Activated T-helper 2 cell treated with anti-CD3 and anti-CD28 coated beads, Interferon-gamma antibody, Interleukin-2, Interleukin-4, amounts not matched to agents 10 μg/mL and 5 μg/mL and 100 μg/mL, durations not matched to agents 14 hours and 24 hours and 36 hours (primary cell): ENCODE measurements at regions of chr3 and their contacts with region 1.

Region 1: GRCh38 chr3:147389717-147390116 is 16.6 kb downstream of the ZIC4 start:
- DNase-seq: no peak
- H3K4me3 Mint-ChIP-seq: no peak overlapping the region
- H3K27ac Mint-ChIP-seq: no peak overlapping the region
- H3K4me1 Mint-ChIP-seq: no peaks in the 10 kb centered on the region
- H3K27me3 Mint-ChIP-seq: peaks cover 75% of the 10 kb centered on the region

Region 2: DNA sequence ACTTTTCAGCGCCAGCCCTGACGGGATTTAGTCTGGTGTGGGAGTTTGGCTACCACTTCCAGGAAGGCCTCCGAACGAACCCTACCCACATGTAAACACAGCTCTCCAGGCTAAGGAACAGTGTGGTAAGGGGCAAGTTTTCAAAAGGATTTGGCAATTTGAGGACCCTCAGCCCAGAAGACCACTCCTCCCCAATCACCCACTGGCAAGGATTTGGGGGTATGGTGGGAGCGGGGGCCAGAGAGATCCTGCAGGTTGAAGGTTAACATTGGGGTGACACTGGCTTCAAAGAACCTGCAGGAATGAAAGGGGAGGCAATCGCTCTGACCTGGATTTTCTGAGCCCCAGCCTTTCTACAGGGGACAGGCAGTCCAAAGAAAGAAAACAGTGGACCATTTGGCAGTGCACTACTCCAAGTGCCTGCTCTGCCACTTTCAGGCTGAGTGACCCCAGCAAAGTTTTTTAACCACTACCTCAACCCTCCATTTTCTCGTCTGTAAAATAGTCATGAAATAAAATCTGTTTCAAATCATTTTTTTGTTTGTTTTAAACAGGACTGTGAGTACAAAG is 17.9 kb before region 1 on chr3:
- intact Hi-C with region 1: loop called (anchors 2 kb)
- DNase-seq: no peak
- H3K4me3 Mint-ChIP-seq: no peak overlapping the region
- H3K27ac Mint-ChIP-seq: no peak overlapping the region
- H3K4me1 Mint-ChIP-seq: no peaks in the 10 kb centered on the region
- H3K27me3 Mint-ChIP-seq: peaks cover 62% of the 10 kb centered on the region

Region 3: GRCh38 chr3:147881933-147882332 is 492.2 kb after region 1 on chr3:
- intact Hi-C with region 1: no loop called
- DNase-seq: no peak
- H3K4me3 Mint-ChIP-seq: no peak overlapping the region
- H3K27ac Mint-ChIP-seq: no peak overlapping the region
- H3K4me1 Mint-ChIP-seq: no peaks in the 10 kb centered on the region
- H3K27me3 Mint-ChIP-seq: no peaks in the 10 kb centered on the region